Activated CD4-positive, alpha-beta memory T cell treated with anti-CD3 and anti-CD28 coated beads for 36 hours (primary cell): ENCODE measurements at regions of chr16 and their contacts with region 1.

Region 1: GRCh38 chr16:31868691-31869167 is 4.9 kb upstream of the ZNF267 start:
- DNase-seq: peak; percentile 87
- H3K4me3 Mint-ChIP-seq: peak overlapping the region; percentile 59
- H3K27ac Mint-ChIP-seq: peak overlapping the region; percentile 96
- H3K4me1 Mint-ChIP-seq: peaks cover 51% of the 10 kb centered on the region
- H3K27me3 Mint-ChIP-seq: no peaks in the 10 kb centered on the region

Region 2: GRCh38 chr16:30957456-30958174 is 911.1 kb before region 1 on chr16 and contains the start of gene SETD1A:
- CTCF ChIA-PET with region 1: no interaction called
- POLR2A ChIA-PET with region 1: no interaction called
- intact Hi-C with region 1: loop called (anchors 1 kb)
- DNase-seq: peak; percentile 97
- H3K4me3 Mint-ChIP-seq: peak within 1 kb of the TSS; percentile 92
- H3K27ac Mint-ChIP-seq: peak within 1 kb of the TSS; percentile 99
- H3K4me1 Mint-ChIP-seq: peaks cover 26% of the 10 kb centered on the region
- H3K27me3 Mint-ChIP-seq: no peaks in the 10 kb centered on the region
- total RNA-seq, gene SETD1A: 16.4 to 17.4 TPM

Region 3: GRCh38 chr16:30997000-30997886 is 871.5 kb before region 1 on chr16:
- CTCF ChIA-PET with region 1: no interaction called
- POLR2A ChIA-PET with region 1: no interaction called
- intact Hi-C with region 1: loop called (anchors 10 kb)
- DNase-seq: peak; percentile 90
- H3K4me3 Mint-ChIP-seq: peak overlapping the region; percentile 73
- H3K27ac Mint-ChIP-seq: no peak overlapping the region
- H3K4me1 Mint-ChIP-seq: peaks cover 12% of the 10 kb centered on the region
- H3K27me3 Mint-ChIP-seq: peaks cover 1% of the 10 kb centered on the region

Region 4: GRCh38 chr16:31094424-31095120 is 774.2 kb before region 1 on chr16 and contains the start of gene VKORC1:
- CTCF ChIA-PET with region 1: no interaction called
- POLR2A ChIA-PET with region 1: no interaction called
- intact Hi-C with region 1: loop called (anchors 2 kb)
- DNase-seq: peak; percentile 95
- H3K4me3 Mint-ChIP-seq: peak within 1 kb of the TSS; percentile 93
- H3K27ac Mint-ChIP-seq: peak within 1 kb of the TSS; percentile 84
- H3K4me1 Mint-ChIP-seq: peaks cover 24% of the 10 kb centered on the region
- H3K27me3 Mint-ChIP-seq: no peaks in the 10 kb centered on the region
- total RNA-seq, gene VKORC1: 67.3 to 72.3 TPM

Region 5: GRCh38 chr16:31458844-31459721 is 409.6 kb before region 1 on chr16 and contains the start of gene ARMC5:
- CTCF ChIA-PET with region 1: interaction called, 41 read pairs
- POLR2A ChIA-PET with region 1: interaction called, 18 read pairs
- intact Hi-C with region 1: loop called (anchors 1 kb)
- DNase-seq: peak; percentile 98
- H3K4me3 Mint-ChIP-seq: peak within 1 kb of the TSS; percentile 87
- H3K27ac Mint-ChIP-seq: peak within 1 kb of the TSS; percentile 94
- H3K4me1 Mint-ChIP-seq: peaks cover 48% of the 10 kb centered on the region
- H3K27me3 Mint-ChIP-seq: no peaks in the 10 kb centered on the region
- total RNA-seq, gene ARMC5: 5.5 to 6.4 TPM

Region 6: DNA sequence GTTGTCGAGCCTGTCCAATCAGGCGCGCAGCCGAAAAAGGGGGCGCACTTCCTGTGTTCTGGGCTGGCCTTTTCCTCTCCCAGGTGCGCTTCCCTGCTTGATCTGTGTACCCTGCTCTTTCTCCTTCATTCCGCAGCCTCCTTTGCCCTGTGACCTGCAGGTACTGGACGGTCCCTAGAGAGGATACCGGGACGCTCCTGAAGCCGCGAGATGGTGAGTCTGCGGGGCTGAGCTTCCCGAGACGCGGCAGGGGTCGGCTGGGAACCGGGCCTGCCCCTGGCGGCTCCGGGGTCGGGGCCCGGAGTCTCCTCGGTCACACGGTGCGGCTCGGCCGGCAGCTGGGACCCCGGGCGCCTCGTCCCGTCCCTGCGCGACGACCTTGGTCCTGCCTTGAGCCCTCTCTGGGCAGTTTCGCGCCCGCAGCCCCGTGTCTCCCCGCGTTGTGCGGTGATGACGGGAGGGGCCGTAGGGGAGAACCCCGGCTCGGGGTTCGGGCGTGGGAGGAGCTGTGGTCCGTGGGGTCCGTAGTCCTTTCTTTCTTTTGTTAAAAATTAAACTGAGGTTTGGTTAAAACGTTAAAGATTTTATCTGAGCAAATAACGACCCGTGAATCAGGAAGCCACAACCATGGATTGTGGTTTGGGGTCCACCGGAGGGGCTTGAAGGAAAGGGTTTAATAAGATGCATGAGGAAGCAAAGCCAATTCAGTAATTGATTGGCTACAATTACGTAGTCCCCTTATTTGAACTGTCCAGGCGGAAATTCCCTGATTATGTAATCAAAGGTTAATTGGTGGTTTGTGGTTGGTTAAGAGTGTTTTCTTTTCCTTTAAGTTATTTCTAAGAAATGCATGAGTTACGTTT is 168.0 kb before region 1 on chr16:
- CTCF ChIA-PET with region 1: interaction called, 5 read pairs
- POLR2A ChIA-PET with region 1: interaction called, 6 read pairs
- intact Hi-C with region 1: loop called (anchors 2 kb)
- DNase-seq: peak; percentile 92
- H3K4me3 Mint-ChIP-seq: peak overlapping the region; percentile 90
- H3K27ac Mint-ChIP-seq: peak overlapping the region; percentile 93
- H3K4me1 Mint-ChIP-seq: peaks cover 28% of the 10 kb centered on the region
- H3K27me3 Mint-ChIP-seq: no peaks in the 10 kb centered on the region

Region 7: GRCh38 chr16:31833047-31833446 is 35.7 kb before region 1 on chr16:
- CTCF ChIA-PET with region 1: no interaction called
- POLR2A ChIA-PET with region 1: no interaction called
- intact Hi-C with region 1: no loop called
- DNase-seq: no peak
- H3K4me3 Mint-ChIP-seq: no peak overlapping the region
- H3K27ac Mint-ChIP-seq: no peak overlapping the region
- H3K4me1 Mint-ChIP-seq: no peaks in the 10 kb centered on the region
- H3K27me3 Mint-ChIP-seq: peaks cover 4% of the 10 kb centered on the region

Region 8: DNA sequence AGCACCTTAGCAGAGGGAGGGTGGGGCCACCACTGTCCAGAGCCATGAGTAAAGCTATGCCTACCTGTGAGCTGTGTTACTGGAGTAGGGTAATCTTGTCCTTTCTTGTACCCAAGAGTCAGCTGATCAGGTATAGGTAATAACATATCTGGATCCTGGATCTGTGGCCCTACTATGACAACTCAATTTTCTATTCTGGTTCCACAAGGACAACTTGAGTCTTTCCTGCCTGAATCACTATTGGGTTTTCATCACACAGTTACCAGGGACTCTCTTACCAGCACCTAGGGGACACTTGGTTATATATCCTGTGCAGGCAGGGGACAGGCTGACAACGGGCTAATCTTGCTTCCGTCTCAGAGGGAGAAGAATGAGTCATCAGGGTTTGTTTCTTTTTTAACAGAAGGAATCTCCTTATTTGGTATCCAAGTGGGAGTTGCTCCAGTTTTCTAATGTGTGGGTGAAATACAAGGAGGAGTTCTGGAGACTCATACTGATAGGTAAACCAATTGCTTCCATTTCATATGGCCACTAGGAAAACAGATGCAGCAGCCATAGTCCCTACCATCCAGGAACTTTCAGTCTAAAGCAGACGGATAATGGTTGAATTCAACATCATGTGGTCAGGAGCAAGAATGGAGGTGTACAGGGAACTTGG is 11.7 kb after region 1 on chr16:
- CTCF ChIA-PET with region 1: interaction called, 42 read pairs
- POLR2A ChIA-PET with region 1: interaction called, 26 read pairs
- intact Hi-C with region 1: loop called (anchors 1 kb)
- DNase-seq: peak; percentile 73
- H3K4me3 Mint-ChIP-seq: peak overlapping the region; percentile 90
- H3K27ac Mint-ChIP-seq: peak overlapping the region; percentile 99
- H3K4me1 Mint-ChIP-seq: peaks cover 87% of the 10 kb centered on the region
- H3K27me3 Mint-ChIP-seq: no peaks in the 10 kb centered on the region